ENCODE measurements at regions of chr6 and their contacts with region 1.

Region 1: DNA sequence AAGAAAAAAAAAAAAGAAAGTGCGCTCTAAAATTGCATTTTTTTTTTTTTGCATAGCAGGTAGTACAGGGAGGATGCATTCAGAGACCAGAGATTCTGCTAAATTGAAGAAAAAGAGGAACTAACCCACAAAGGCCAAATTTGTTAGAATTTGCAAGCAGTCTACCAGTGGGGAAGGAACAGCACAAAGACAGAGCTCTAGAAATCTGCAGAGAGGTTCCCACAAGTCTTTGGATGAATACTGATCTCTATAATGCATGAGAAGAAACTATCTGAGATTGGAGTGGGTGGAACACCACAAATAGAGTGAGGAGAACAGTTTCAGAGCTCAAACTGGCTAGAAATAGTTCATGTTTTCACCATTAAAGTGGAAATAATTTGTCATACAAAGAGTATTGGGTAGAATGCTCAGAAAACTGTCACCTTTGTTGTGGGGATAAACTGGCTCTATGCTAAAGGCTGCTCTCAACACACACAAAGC is 79.6 kb upstream of the AHI1 start:
- DNase-seq: no peak
- ATAC-seq: no peak
- H3K4me3 ChIP-seq: no peak overlapping the region
- H3K4me3 Mint-ChIP-seq: peak overlapping the region in 2 of 10 donors; percentile 6 to 55
- H3K27ac ChIP-seq: no peak overlapping the region
- H3K27ac Mint-ChIP-seq: peak overlapping the region in 8 of 9 donors; percentile 13 to 91 (median 55)
- H3K4me1 ChIP-seq: peaks cover 0 to 6% of the 10 kb centered on the region in 2 donors
- H3K4me1 Mint-ChIP-seq: peaks cover 0 to 49% (median 24%) of the 10 kb centered on the region in 7 donors
- H3K27me3 ChIP-seq: no peaks in the 10 kb centered on the region
- H3K27me3 Mint-ChIP-seq: no peaks in the 10 kb centered on the region

Region 2: GRCh38 chr6:135522965-135523692 is 54.0 kb before region 1 on chr6:
- CTCF ChIA-PET with region 1: no interaction called
- POLR2A ChIA-PET with region 1: no interaction called
- intact Hi-C with region 1: no loop called
- DNase-seq: no peak
- ATAC-seq: peak; percentile 48
- H3K4me3 ChIP-seq: no peak overlapping the region
- H3K4me3 Mint-ChIP-seq: no peak overlapping the region
- H3K27ac ChIP-seq: no peak overlapping the region
- H3K27ac Mint-ChIP-seq: peak overlapping the region in 1 of 9 donors; percentile 50
- H3K4me1 ChIP-seq: no peaks in the 10 kb centered on the region
- H3K4me1 Mint-ChIP-seq: peaks cover 0 to 11% (median 0%) of the 10 kb centered on the region in 7 donors
- H3K27me3 ChIP-seq: no peaks in the 10 kb centered on the region
- H3K27me3 Mint-ChIP-seq: no peaks in the 10 kb centered on the region

Region 3: DNA sequence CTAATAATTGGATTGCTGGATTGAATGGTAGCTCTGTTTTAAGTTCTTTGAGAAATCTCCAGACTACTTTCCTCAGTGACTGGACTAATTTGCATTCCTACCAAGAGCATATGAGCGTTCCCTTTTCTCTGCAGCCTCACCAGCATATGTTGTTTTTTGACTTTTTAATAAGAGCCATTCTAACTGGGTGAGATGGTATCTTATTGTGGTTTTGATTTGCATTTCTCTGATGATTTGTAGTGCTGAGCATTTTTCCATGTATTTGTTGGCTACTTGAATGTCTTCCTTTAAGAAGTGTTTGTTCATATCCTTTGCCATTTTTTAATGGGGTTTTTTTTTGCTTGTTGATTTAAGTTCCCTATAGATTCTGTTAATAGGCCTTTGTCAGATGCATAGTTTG is 15.2 kb after region 1 on chr6:
- CTCF ChIA-PET with region 1: no interaction called
- POLR2A ChIA-PET with region 1: no interaction called
- intact Hi-C with region 1: no loop called
- DNase-seq: no peak
- ATAC-seq: no peak
- H3K4me3 ChIP-seq: no peak overlapping the region
- H3K4me3 Mint-ChIP-seq: no peak overlapping the region
- H3K27ac ChIP-seq: no peak overlapping the region
- H3K27ac Mint-ChIP-seq: peak overlapping the region in 1 of 9 donors; percentile 6
- H3K4me1 ChIP-seq: no peaks in the 10 kb centered on the region
- H3K4me1 Mint-ChIP-seq: peaks cover 0 to 29% (median under 1%) of the 10 kb centered on the region in 7 donors
- H3K27me3 ChIP-seq: no peaks in the 10 kb centered on the region
- H3K27me3 Mint-ChIP-seq: no peaks in the 10 kb centered on the region

Region 4: DNA sequence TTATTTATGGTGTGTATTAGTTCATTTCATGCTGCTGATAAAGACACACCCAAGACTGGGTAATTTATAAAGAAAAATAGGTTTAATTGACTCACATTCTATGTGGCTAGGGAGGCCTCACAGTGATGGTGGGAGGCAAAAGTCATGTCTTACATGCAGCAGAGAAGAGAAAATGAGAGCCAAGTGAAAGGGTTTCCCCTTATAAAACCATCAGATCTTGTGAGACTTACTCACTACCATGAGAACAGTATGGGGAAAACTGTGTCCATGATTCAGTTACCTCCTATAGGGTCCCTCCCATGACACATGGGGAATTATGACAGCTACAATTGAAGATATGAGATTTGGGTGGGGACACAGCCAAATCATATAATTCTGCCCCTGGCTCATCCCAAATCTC is 70.4 kb after region 1 on chr6:
- CTCF ChIA-PET with region 1: no interaction called
- POLR2A ChIA-PET with region 1: no interaction called
- intact Hi-C with region 1: loop called in 1 of 2 experiments (anchors 5 kb)
- DNase-seq: no peak
- ATAC-seq: no peak
- H3K4me3 ChIP-seq: no peak overlapping the region
- H3K4me3 Mint-ChIP-seq: no peak overlapping the region
- H3K27ac ChIP-seq: no peak overlapping the region
- H3K27ac Mint-ChIP-seq: no peak overlapping the region
- H3K4me1 ChIP-seq: no peaks in the 10 kb centered on the region
- H3K4me1 Mint-ChIP-seq: peaks cover 0 to 39% (median 2%) of the 10 kb centered on the region in 7 donors
- H3K27me3 ChIP-seq: no peaks in the 10 kb centered on the region
- H3K27me3 Mint-ChIP-seq: no peaks in the 10 kb centered on the region

Measured in naive thymus-derived CD4-positive, alpha-beta T cell (primary cell).